K562 (cell line): ENCODE measurements at regions of chr6 and their contacts with region 1.

Region 1: GRCh38 chr6:113616701-113617274 is 240.4 kb upstream of the MARCKS start:
- DNase-seq: no peak
- ATAC-seq: no peak
- H3K4me3 ChIP-seq: no peak overlapping the region
- H3K27ac ChIP-seq: no peak overlapping the region
- H3K4me1 ChIP-seq: no peaks in the 10 kb centered on the region
- H3K27me3 ChIP-seq: no peaks in the 10 kb centered on the region
- CTCF ChIP-seq: no peak
- EP300 ChIP-seq: no peak
- POLR2A ChIP-seq: no peak
- RAD21 ChIP-seq: no peak

Region 2: GRCh38 chr6:113600551-113601344 is 16.0 kb before region 1 on chr6:
- CTCF ChIA-PET with region 1: no interaction called
- POLR2A ChIA-PET with region 1: no interaction called
- in situ Hi-C with region 1: no loop called
- intact Hi-C with region 1: no loop called
- DNase-seq: no peak
- ATAC-seq: no peak
- H3K4me3 ChIP-seq: no peak overlapping the region
- H3K27ac ChIP-seq: no peak overlapping the region
- H3K4me1 ChIP-seq: no peaks in the 10 kb centered on the region
- H3K27me3 ChIP-seq: no peaks in the 10 kb centered on the region
- CTCF ChIP-seq: no peak
- EP300 ChIP-seq: no peak
- POLR2A ChIP-seq: no peak
- RAD21 ChIP-seq: no peak

Region 3: GRCh38 chr6:113671421-113671820 is 54.6 kb after region 1 on chr6:
- CTCF ChIA-PET with region 1: no interaction called
- POLR2A ChIA-PET with region 1: no interaction called
- in situ Hi-C with region 1: no loop called
- intact Hi-C with region 1: loop called (anchors 2 kb)
- DNase-seq: no peak
- ATAC-seq: no peak
- H3K4me3 ChIP-seq: no peak overlapping the region
- H3K27ac ChIP-seq: no peak overlapping the region
- H3K4me1 ChIP-seq: no peaks in the 10 kb centered on the region
- H3K27me3 ChIP-seq: no peaks in the 10 kb centered on the region
- CTCF ChIP-seq: no peak
- EP300 ChIP-seq: no peak
- POLR2A ChIP-seq: no peak
- RAD21 ChIP-seq: no peak